ENCODE measurements at regions of chr1 and their contacts with region 1.

Region 1: GRCh38 chr1:175154629-175155472 is 37.7 kb downstream of the KIAA0040 start:
- DNase-seq: peak; percentile 35
- ATAC-seq: peak; percentile 66
- H3K4me3 ChIP-seq: no peak overlapping the region
- H3K27ac ChIP-seq: no peak overlapping the region
- H3K4me1 ChIP-seq: no peaks in the 10 kb centered on the region
- H3K27me3 ChIP-seq: peaks cover 3% of the 10 kb centered on the region; the same call in 1 of the 2 replicates
- CTCF ChIP-seq: peak; percentile 72
- POLR2A ChIP-seq: no peak
- RAD21 ChIP-seq: peak; percentile 59

Region 2: GRCh38 chr1:174976436-174977108 is 178.3 kb before region 1 on chr1:
- CTCF ChIA-PET with region 1: no interaction called
- POLR2A ChIA-PET with region 1: no interaction called
- dilution Hi-C with region 1: no loop called
- in situ Hi-C with region 1: no loop called
- intact Hi-C with region 1: no loop called
- DNase-seq: peak; percentile 64
- ATAC-seq: peak; percentile 51; the same call in 1 of the 2 replicates
- H3K4me3 ChIP-seq: no peak overlapping the region
- H3K27ac ChIP-seq: no peak overlapping the region
- H3K4me1 ChIP-seq: peaks cover 2% of the 10 kb centered on the region; the same call in 1 of the 2 replicates
- H3K27me3 ChIP-seq: no peaks in the 10 kb centered on the region
- CTCF ChIP-seq: no peak
- POLR2A ChIP-seq: no peak
- RAD21 ChIP-seq: no peak

Region 3: GRCh38 chr1:175388285-175388684 is 233.4 kb after region 1 on chr1:
- CTCF ChIA-PET with region 1: no interaction called
- POLR2A ChIA-PET with region 1: interaction called, 14 read pairs
- dilution Hi-C with region 1: no loop called
- in situ Hi-C with region 1: no loop called
- intact Hi-C with region 1: no loop called
- DNase-seq: no peak
- ATAC-seq: no peak
- H3K4me3 ChIP-seq: no peak overlapping the region
- H3K27ac ChIP-seq: no peak overlapping the region
- H3K4me1 ChIP-seq: no peaks in the 10 kb centered on the region
- H3K27me3 ChIP-seq: no peaks in the 10 kb centered on the region
- CTCF ChIP-seq: no peak
- POLR2A ChIP-seq: no peak
- RAD21 ChIP-seq: no peak

Region 4: DNA sequence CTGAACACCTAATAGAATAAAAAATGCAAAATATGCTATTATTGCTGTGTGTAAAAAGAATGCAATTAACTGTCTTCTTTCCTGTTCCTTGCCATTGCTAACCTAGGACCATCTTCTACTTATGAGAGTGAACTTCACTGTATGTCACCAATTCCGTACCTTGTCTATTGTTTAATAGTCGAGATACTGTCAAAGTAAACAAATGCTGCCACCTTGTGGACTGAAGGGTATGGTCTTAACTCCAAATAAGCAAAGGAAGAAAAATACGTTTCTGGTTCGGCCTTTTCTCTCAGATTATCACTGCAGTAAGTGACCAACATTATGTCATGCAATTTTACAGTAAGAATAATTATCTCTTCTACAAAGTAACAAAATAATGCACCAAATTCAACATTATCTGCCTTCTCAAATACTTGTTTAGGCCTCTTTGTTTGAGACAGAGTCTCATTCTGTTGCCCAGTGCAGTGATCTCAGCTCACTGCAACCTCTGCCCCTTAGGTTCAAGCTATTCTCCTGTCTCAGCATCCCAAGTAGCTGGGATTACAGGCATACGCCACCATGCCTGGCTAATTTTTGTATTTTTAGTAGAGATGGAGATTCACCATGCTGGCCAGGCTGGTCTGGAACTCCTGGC is 918.8 kb after region 1 on chr1:
- CTCF ChIA-PET with region 1: interaction called, 3 read pairs
- POLR2A ChIA-PET with region 1: no interaction called
- dilution Hi-C with region 1: no loop called
- in situ Hi-C with region 1: no loop called
- intact Hi-C with region 1: loop called (anchors 1 kb)
- DNase-seq: peak; percentile 72
- ATAC-seq: peak; percentile 61
- H3K4me3 ChIP-seq: no peak overlapping the region
- H3K27ac ChIP-seq: no peak overlapping the region
- H3K4me1 ChIP-seq: peaks cover 1% of the 10 kb centered on the region; the same call in 1 of the 2 replicates
- H3K27me3 ChIP-seq: no peaks in the 10 kb centered on the region
- CTCF ChIP-seq: peak; percentile 66
- POLR2A ChIP-seq: no peak
- RAD21 ChIP-seq: peak; percentile 62

Region 5: GRCh38 chr1:176374967-176375569 is 1220.2 kb after region 1 on chr1:
- CTCF ChIA-PET with region 1: no interaction called
- POLR2A ChIA-PET with region 1: no interaction called
- dilution Hi-C with region 1: no loop called
- in situ Hi-C with region 1: no loop called
- intact Hi-C with region 1: loop called (anchors 5 kb)
- DNase-seq: peak; percentile 62
- ATAC-seq: peak; percentile 94
- H3K4me3 ChIP-seq: no peak overlapping the region
- H3K27ac ChIP-seq: no peak overlapping the region
- H3K4me1 ChIP-seq: no peaks in the 10 kb centered on the region
- H3K27me3 ChIP-seq: no peaks in the 10 kb centered on the region
- CTCF ChIP-seq: peak; percentile 83
- POLR2A ChIP-seq: no peak
- RAD21 ChIP-seq: peak; percentile 71

Region 6: DNA sequence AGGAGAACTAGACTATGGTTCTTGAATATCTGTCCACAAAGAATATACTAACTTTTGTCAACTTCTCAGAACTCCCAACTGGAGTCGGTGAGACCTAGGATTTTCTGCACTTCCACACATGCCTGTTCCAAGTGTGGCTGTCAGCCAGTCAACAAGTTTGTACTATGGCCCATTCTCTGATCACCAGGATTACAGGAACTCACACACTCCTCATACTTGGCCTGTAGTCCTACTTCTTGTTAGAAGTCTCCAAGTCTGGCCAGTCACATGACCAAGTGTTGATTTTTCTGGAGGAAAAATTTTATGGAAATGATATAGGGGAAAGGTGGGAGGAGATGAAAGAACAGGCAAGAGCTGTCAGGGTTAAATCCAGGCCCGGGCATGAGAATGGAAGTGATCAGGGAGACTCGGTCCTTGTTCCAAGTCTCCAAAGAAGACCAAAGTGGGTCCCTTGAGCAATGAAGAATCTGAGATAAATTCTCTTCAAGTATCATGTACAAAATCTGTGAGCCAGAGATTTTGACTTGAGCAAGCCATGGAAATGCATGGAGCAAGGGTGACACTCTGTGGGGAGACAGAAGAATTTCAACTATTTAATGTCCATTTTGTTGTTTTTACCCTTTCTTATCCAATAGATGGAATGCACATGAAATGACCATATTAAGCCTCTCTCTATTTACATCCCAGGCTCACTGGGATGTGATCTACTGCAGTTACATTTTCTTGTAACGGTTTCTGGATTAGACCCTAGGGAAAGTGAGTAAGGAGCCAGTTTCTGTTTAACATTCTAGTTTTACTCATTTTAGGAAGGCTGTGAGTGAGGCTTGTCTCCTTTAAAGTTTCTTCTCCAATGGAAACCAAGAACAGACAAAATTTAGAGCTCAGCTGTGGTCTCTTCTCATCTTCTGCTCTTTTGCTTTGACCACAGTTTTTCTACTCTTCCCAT is 1688.8 kb after region 1 on chr1:
- CTCF ChIA-PET with region 1: no interaction called
- POLR2A ChIA-PET with region 1: no interaction called
- dilution Hi-C with region 1: no loop called
- in situ Hi-C with region 1: no loop called
- intact Hi-C with region 1: loop called (anchors 1 kb)
- DNase-seq: peak; percentile 41
- ATAC-seq: peak; percentile 61
- H3K4me3 ChIP-seq: no peak overlapping the region
- H3K27ac ChIP-seq: no peak overlapping the region
- H3K4me1 ChIP-seq: no peaks in the 10 kb centered on the region
- H3K27me3 ChIP-seq: no peaks in the 10 kb centered on the region
- CTCF ChIP-seq: peak; percentile 53
- POLR2A ChIP-seq: no peak
- RAD21 ChIP-seq: peak; percentile 65

Region 7: GRCh38 chr1:176880954-176881595 is 1726.2 kb after region 1 on chr1:
- CTCF ChIA-PET with region 1: interaction called, 4 read pairs
- POLR2A ChIA-PET with region 1: no interaction called
- dilution Hi-C with region 1: no loop called
- in situ Hi-C with region 1: no loop called
- intact Hi-C with region 1: loop called (anchors 1 kb)
- DNase-seq: peak; percentile 62
- ATAC-seq: peak; percentile 98
- H3K4me3 ChIP-seq: no peak overlapping the region
- H3K27ac ChIP-seq: no peak overlapping the region
- H3K4me1 ChIP-seq: no peaks in the 10 kb centered on the region
- H3K27me3 ChIP-seq: no peaks in the 10 kb centered on the region
- CTCF ChIP-seq: peak; percentile 73
- POLR2A ChIP-seq: no peak
- RAD21 ChIP-seq: peak; percentile 73